Caco-2 (cell line): ENCODE measurements at regions of chr17 and their contacts with region 1.

Region 1: DNA sequence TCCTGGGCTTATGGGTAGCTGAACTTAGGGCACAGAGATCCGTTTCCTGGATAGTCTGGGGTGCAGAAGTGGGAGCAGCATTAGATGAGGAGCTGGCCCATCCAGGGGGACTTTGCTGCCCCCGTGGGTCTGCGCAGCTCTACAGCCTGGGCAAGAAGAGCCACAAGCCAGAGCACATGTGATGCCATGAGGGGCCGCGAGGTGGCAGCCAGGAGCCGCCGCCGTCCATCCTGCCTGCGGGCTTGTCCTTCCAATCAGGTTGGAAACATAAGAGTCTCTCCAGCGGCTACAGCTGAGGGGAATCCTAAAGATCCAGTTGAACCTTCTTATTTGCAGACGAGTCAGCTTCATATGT is 21.9 kb downstream of the C1QTNF1 start:
- DNase-seq: peak; percentile 70 to 85
- H3K4me3 ChIP-seq: no peak overlapping the region
- H3K4me3 Mint-ChIP-seq: no peak overlapping the region
- H3K27ac Mint-ChIP-seq: no peak overlapping the region
- H3K4me1 ChIP-seq: no peaks in the 10 kb centered on the region
- H3K4me1 Mint-ChIP-seq: peaks cover 6% of the 10 kb centered on the region
- H3K27me3 ChIP-seq: no peaks in the 10 kb centered on the region
- H3K27me3 Mint-ChIP-seq: no peaks in the 10 kb centered on the region
- CTCF ChIP-seq: peak; percentile 95 to 97

Region 2: GRCh38 chr17:78617511-78618061 is 428.2 kb before region 1 on chr17:
- CTCF ChIA-PET with region 1: no interaction called
- POLR2A ChIA-PET with region 1: no interaction called
- intact Hi-C with region 1: no loop called
- DNase-seq: no peak
- H3K4me3 ChIP-seq: no peak overlapping the region
- H3K4me3 Mint-ChIP-seq: no peak overlapping the region
- H3K27ac Mint-ChIP-seq: no peak overlapping the region
- H3K4me1 ChIP-seq: no peaks in the 10 kb centered on the region
- H3K4me1 Mint-ChIP-seq: no peaks in the 10 kb centered on the region
- H3K27me3 ChIP-seq: no peaks in the 10 kb centered on the region
- H3K27me3 Mint-ChIP-seq: no peaks in the 10 kb centered on the region
- CTCF ChIP-seq: no peak

Region 3: GRCh38 chr17:78831688-78832540 is 213.9 kb before region 1 on chr17:
- CTCF ChIA-PET with region 1: no interaction called
- POLR2A ChIA-PET with region 1: interaction called, 16 read pairs
- intact Hi-C with region 1: no loop called
- DNase-seq: no peak
- H3K4me3 ChIP-seq: no peak overlapping the region
- H3K4me3 Mint-ChIP-seq: no peak overlapping the region
- H3K27ac Mint-ChIP-seq: no peak overlapping the region
- H3K4me1 ChIP-seq: no peaks in the 10 kb centered on the region
- H3K4me1 Mint-ChIP-seq: no peaks in the 10 kb centered on the region
- H3K27me3 ChIP-seq: no peaks in the 10 kb centered on the region
- H3K27me3 Mint-ChIP-seq: no peaks in the 10 kb centered on the region
- CTCF ChIP-seq: no peak

Region 4: GRCh38 chr17:78986048-78986648 is 59.7 kb before region 1 on chr17:
- CTCF ChIA-PET with region 1: interaction called, 6 read pairs
- POLR2A ChIA-PET with region 1: no interaction called
- intact Hi-C with region 1: loop called (anchors 1 kb)
- DNase-seq: peak in 1 of 2 experiments; percentile 46
- H3K4me3 ChIP-seq: peak overlapping the region; percentile 8; the same call in 1 of the 2 replicates
- H3K4me3 Mint-ChIP-seq: peak overlapping the region; percentile 65
- H3K27ac Mint-ChIP-seq: peak overlapping the region; percentile 67
- H3K4me1 ChIP-seq: peaks cover 13% of the 10 kb centered on the region
- H3K4me1 Mint-ChIP-seq: no peaks in the 10 kb centered on the region
- H3K27me3 ChIP-seq: no peaks in the 10 kb centered on the region
- H3K27me3 Mint-ChIP-seq: no peaks in the 10 kb centered on the region
- CTCF ChIP-seq: peak; percentile 26 to 32

Region 5: DNA sequence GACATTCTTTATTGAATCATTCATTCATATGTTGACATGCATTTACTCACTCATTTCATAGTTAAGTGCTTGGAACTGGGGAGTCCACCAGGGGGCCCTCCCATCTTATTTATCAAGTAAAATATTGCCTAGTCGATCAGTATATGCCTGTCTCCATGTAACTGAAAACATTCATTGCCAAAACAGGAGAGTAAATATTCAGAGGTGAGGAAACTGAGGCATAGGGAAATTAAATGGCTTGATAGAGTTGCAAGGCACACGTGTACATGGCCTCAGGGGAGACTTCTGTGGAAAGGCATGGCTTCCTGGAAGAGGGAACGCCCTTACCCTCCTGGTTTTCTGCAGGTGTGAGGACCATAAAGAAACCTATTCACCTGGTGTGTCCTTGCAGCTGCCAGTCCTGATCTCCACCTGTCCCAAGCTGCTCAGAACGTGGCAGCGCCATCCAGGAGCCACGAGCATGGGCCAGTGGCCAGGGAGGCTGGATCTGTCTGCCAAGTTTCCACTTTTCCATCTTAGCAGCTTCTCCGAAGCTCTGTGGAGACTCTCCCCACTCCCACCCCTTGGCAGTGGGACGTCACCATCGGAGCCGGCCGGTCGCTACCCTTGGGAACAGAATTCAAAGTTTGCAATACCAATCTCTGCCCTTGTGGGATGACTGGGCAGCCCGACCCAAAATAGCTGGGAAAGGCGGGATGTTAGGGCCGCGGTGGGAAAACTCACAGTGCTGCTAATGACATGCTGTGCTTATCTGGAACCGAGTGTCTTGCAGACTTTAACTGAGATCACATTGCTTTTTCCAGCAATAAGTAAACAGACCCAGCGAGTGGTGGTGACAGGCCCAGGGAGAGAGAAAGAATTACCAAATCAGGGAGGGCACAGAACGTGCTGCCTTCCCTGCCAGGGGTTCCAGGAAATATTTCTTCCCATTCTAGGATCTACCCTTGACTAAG is 25.9 kb before region 1 on chr17:
- CTCF ChIA-PET with region 1: interaction called, 11 read pairs
- POLR2A ChIA-PET with region 1: no interaction called
- intact Hi-C with region 1: loop called (anchors 1 kb)
- DNase-seq: peak; percentile 78
- H3K4me3 ChIP-seq: no peak overlapping the region
- H3K4me3 Mint-ChIP-seq: no peak overlapping the region
- H3K27ac Mint-ChIP-seq: peak overlapping the region; percentile 77
- H3K4me1 ChIP-seq: peaks cover 49% of the 10 kb centered on the region
- H3K4me1 Mint-ChIP-seq: peaks cover 56% of the 10 kb centered on the region
- H3K27me3 ChIP-seq: no peaks in the 10 kb centered on the region
- H3K27me3 Mint-ChIP-seq: no peaks in the 10 kb centered on the region
- CTCF ChIP-seq: peak; percentile 72 to 73

Region 6: GRCh38 chr17:79027925-79028813 is 17.6 kb before region 1 on chr17:
- CTCF ChIA-PET with region 1: interaction called, 23 read pairs
- POLR2A ChIA-PET with region 1: interaction called, 3 read pairs
- intact Hi-C with region 1: no loop called
- DNase-seq: peak in 1 of 2 experiments; percentile 31
- H3K4me3 ChIP-seq: no peak overlapping the region
- H3K4me3 Mint-ChIP-seq: peak overlapping the region; percentile 67
- H3K27ac Mint-ChIP-seq: peak overlapping the region; percentile 98
- H3K4me1 ChIP-seq: peaks cover 41% of the 10 kb centered on the region
- H3K4me1 Mint-ChIP-seq: peaks cover 34% of the 10 kb centered on the region
- H3K27me3 ChIP-seq: no peaks in the 10 kb centered on the region
- H3K27me3 Mint-ChIP-seq: no peaks in the 10 kb centered on the region
- CTCF ChIP-seq: no peak

Region 7: GRCh38 chr17:79082311-79083190 is 36.7 kb after region 1 on chr17:
- CTCF ChIA-PET with region 1: interaction called, 8 read pairs
- POLR2A ChIA-PET with region 1: no interaction called
- intact Hi-C with region 1: loop called (anchors 1 kb)
- DNase-seq: peak; percentile 60 to 80
- H3K4me3 ChIP-seq: no peak overlapping the region
- H3K4me3 Mint-ChIP-seq: no peak overlapping the region
- H3K27ac Mint-ChIP-seq: no peak overlapping the region
- H3K4me1 ChIP-seq: no peaks in the 10 kb centered on the region
- H3K4me1 Mint-ChIP-seq: no peaks in the 10 kb centered on the region
- H3K27me3 ChIP-seq: no peaks in the 10 kb centered on the region
- H3K27me3 Mint-ChIP-seq: no peaks in the 10 kb centered on the region
- CTCF ChIP-seq: peak; percentile 89 to 95